ENCODE measurements at regions of chr4 and their contacts with region 1.

Region 1: GRCh38 chr4:75673027-75673958 is at the start of gene G3BP2:
- DNase-seq: peak; percentile 91 to 99 (median 98)
- ATAC-seq: peak; percentile 93 to 95 (median 93)
- H3K4me3 ChIP-seq: peak within 1 kb of the TSS; percentile 96 to 98
- H3K4me3 Mint-ChIP-seq: peak within 1 kb of the TSS; percentile 98 to 100 (median 99)
- H3K27ac ChIP-seq: peak within 1 kb of the TSS; percentile 98
- H3K27ac Mint-ChIP-seq: peak within 1 kb of the TSS; percentile 98 to 99
- H3K4me1 ChIP-seq: peaks cover 14 to 39% of the 10 kb centered on the region in 2 experiments
- H3K4me1 Mint-ChIP-seq: peaks cover 44 to 46% (median 46%) of the 10 kb centered on the region in 3 donors
- H3K27me3 ChIP-seq: peaks cover 0 to 4% of the 10 kb centered on the region in 2 experiments
- H3K27me3 Mint-ChIP-seq: no peaks in the 10 kb centered on the region
- total RNA-seq, gene G3BP2: 135 to 316 (median 141) TPM

Region 2: DNA sequence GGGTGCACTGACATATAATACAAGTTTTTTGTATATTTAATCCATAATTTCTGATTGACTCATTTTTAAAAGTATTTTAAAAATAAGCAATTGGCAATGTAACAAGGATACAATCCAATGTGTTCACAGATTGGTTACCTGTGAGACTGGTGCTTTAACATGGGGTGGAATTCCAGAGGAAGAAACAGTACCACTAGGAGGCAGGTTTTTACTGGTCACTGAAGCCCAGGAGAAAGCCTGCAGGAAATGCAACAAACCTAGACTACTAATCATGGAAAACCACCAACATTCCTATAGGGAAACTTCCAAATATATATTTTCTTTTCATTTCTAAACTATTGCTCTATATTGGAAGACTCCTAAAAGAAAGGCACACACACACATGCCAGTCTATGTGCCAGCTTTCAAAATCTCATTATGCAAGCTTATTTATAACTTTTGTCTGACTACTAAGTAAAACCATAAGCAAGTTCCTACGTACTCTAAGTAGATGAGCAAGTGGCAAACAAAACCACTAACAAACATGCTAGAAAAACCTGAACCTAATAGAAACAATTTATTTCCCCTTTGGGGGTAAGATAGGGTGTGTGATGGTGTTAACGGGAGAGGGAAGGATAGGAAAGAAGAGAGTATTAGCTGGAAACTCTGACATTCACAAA is 19.3 kb before region 1 on chr4:
- CTCF ChIA-PET with region 1: interaction called, 3 to 5 read pairs
- POLR2A ChIA-PET with region 1: interaction called, 9 to 26 read pairs
- DNase-seq: peak in 1 of 35 experiments; percentile 36
- ATAC-seq: no peak
- H3K4me3 ChIP-seq: no peak overlapping the region
- H3K4me3 Mint-ChIP-seq: peak overlapping the region in 2 of 3 donors; percentile 15 to 35
- H3K27ac ChIP-seq: peak overlapping the region; percentile 79
- H3K27ac Mint-ChIP-seq: peak overlapping the region; percentile 73 to 81
- H3K4me1 ChIP-seq: peaks cover 5 to 39% of the 10 kb centered on the region in 2 experiments
- H3K4me1 Mint-ChIP-seq: peaks cover 51 to 64% (median 53%) of the 10 kb centered on the region in 3 donors
- H3K27me3 ChIP-seq: no peaks in the 10 kb centered on the region
- H3K27me3 Mint-ChIP-seq: no peaks in the 10 kb centered on the region

Region 3: GRCh38 chr4:75686346-75686745 is 13.1 kb after region 1 on chr4:
- CTCF ChIA-PET with region 1: interaction called in 1 of 2 experiments, 3 read pairs
- POLR2A ChIA-PET with region 1: interaction called, 11 to 12 read pairs
- DNase-seq: peak in 21 of 35 experiments; percentile 7 to 59 (median 24)
- ATAC-seq: peak; percentile 78 to 87 (median 84)
- H3K4me3 ChIP-seq: no peak overlapping the region
- H3K4me3 Mint-ChIP-seq: peak overlapping the region in 1 of 3 donors; percentile 1
- H3K27ac ChIP-seq: peak overlapping the region; percentile 28
- H3K27ac Mint-ChIP-seq: peak overlapping the region; percentile 0 to 78
- H3K4me1 ChIP-seq: peaks cover 20 to 24% of the 10 kb centered on the region in 2 experiments
- H3K4me1 Mint-ChIP-seq: peaks cover 35 to 37% (median 35%) of the 10 kb centered on the region in 3 donors
- H3K27me3 ChIP-seq: no peaks in the 10 kb centered on the region
- H3K27me3 Mint-ChIP-seq: no peaks in the 10 kb centered on the region

Region 4: DNA sequence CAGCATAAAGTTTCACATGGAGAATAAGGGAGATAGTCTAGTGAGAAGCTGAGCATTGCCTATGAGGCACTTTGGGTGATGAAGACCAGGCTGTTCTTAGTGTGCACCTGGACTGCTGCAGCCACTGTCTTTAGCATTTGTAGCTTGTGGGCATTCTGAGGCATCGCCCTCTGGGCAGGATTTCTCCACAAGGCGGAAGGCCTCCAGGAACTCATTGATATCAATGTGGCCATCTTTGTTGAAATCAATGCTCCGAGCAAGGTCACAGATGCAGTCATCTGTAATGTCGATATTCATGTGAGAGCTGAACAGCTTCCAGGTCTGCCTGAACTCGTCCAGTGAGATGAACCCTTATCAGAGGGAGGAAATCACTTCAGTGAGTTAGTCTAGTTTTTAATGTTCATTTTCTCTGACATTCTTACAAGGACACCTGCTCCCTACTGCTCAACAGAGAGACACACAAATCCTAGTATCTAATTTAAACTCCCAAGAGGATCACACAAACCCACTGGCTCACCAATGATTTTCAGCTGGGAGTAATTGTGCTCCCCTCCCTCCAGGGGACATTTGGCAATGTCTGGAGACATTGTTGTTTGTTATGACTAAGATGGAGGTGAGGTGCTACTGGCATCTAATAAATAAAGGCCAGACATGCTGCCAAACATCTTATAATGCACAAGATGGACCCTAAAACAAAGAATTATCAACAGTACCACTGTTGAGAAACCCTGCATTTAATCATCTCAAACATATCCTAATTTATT is 187.5 kb after region 1 on chr4:
- CTCF ChIA-PET with region 1: no interaction called
- POLR2A ChIA-PET with region 1: no interaction called
- DNase-seq: no peak
- ATAC-seq: no peak
- H3K4me3 ChIP-seq: no peak overlapping the region
- H3K4me3 Mint-ChIP-seq: no peak overlapping the region
- H3K27ac ChIP-seq: no peak overlapping the region
- H3K27ac Mint-ChIP-seq: no peak overlapping the region
- H3K4me1 ChIP-seq: no peaks in the 10 kb centered on the region
- H3K4me1 Mint-ChIP-seq: no peaks in the 10 kb centered on the region
- H3K27me3 ChIP-seq: no peaks in the 10 kb centered on the region
- H3K27me3 Mint-ChIP-seq: peaks cover 0 to 4% of the 10 kb centered on the region in 2 donors